Spleen (tissue), 13 donors: ENCODE measurements at regions of chr18 and their contacts with region 1.

Region 1: GRCh38 chr18:47748847-47749599 is 181.4 kb downstream of the SMAD2 start:
- DNase-seq: peak; percentile 96
- H3K4me3 ChIP-seq: peak overlapping the region in 5 of 8 donors; percentile 17 to 46 (median 19)
- H3K27ac ChIP-seq: no peak overlapping the region
- H3K4me1 ChIP-seq: peaks cover 0 to 12% (median 9%) of the 10 kb centered on the region in 6 donors
- H3K27me3 ChIP-seq: peaks cover 0 to 29% (median 8%) of the 10 kb centered on the region in 7 donors
- CTCF ChIP-seq: peak; percentile 91 to 100 (median 100)
- POLR2A ChIP-seq: no peak

Region 2: GRCh38 chr18:47100214-47100831 is 648.7 kb before region 1 on chr18:
- intact Hi-C with region 1: loop called (anchors 10 kb)
- DNase-seq: peak; percentile 78
- H3K4me3 ChIP-seq: no peak overlapping the region
- H3K27ac ChIP-seq: no peak overlapping the region
- H3K4me1 ChIP-seq: no peaks in the 10 kb centered on the region
- H3K27me3 ChIP-seq: no peaks in the 10 kb centered on the region
- CTCF ChIP-seq: peak in 10 of 11 experiments; percentile 12 to 71 (median 56)
- POLR2A ChIP-seq: no peak

Region 3: GRCh38 chr18:47215554-47216138 is 533.4 kb before region 1 on chr18:
- intact Hi-C with region 1: loop called (anchors 5 kb)
- DNase-seq: no peak
- H3K4me3 ChIP-seq: no peak overlapping the region
- H3K27ac ChIP-seq: no peak overlapping the region
- H3K4me1 ChIP-seq: no peaks in the 10 kb centered on the region
- H3K27me3 ChIP-seq: peaks cover 0 to 61% (median 0%) of the 10 kb centered on the region in 7 donors
- CTCF ChIP-seq: peak in 7 of 11 experiments; percentile 19 to 58 (median 44)
- POLR2A ChIP-seq: no peak

Region 4: GRCh38 chr18:47413327-47413726 is 335.7 kb before region 1 on chr18:
- intact Hi-C with region 1: no loop called
- DNase-seq: no peak
- H3K4me3 ChIP-seq: no peak overlapping the region
- H3K27ac ChIP-seq: no peak overlapping the region
- H3K4me1 ChIP-seq: no peaks in the 10 kb centered on the region
- H3K27me3 ChIP-seq: peaks cover 0 to 56% (median 0%) of the 10 kb centered on the region in 7 donors
- CTCF ChIP-seq: no peak
- POLR2A ChIP-seq: no peak